CD4-positive, alpha-beta T cell (primary cell): ENCODE measurements at regions of chr6 and their contacts with region 1.

Region 1: GRCh38 chr6:54060286-54060685 is 51.0 kb upstream of the MLIP start:
- DNase-seq: no peak
- ATAC-seq: no peak
- H3K4me3 ChIP-seq: no peak overlapping the region
- H3K4me3 Mint-ChIP-seq: no peak overlapping the region
- H3K27ac ChIP-seq: no peak overlapping the region
- H3K27ac Mint-ChIP-seq: no peak overlapping the region
- H3K4me1 ChIP-seq: no peaks in the 10 kb centered on the region
- H3K4me1 Mint-ChIP-seq: no peaks in the 10 kb centered on the region
- H3K27me3 ChIP-seq: no peaks in the 10 kb centered on the region
- H3K27me3 Mint-ChIP-seq: peaks cover 8% of the 10 kb centered on the region
- CTCF ChIP-seq: no peak

Region 2: DNA sequence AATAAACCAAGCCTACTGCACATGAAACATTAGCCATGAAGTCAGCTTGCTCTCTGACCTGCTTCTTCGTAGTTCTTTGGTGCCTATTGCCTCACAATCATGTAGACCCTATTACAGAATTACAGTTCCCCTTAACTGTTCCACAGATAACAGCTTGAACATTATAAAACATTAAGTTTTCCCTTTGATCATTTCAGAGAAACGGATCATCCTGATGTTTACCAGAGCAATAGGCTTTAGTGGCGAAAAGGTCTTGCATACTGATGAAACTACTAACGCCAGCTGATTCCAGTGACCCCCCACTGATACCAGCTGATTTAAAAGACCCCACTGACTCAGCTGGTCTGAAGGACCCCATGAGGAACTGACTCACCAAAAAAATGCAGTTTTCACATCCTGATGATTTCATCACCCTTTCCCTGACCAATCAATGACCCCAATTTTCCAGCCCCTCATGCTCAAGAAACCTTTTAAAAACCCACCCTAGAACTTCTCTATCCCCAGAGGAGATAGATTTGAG is 11.6 kb after region 1 on chr6:
- CTCF ChIA-PET with region 1: no interaction called
- POLR2A ChIA-PET with region 1: no interaction called
- intact Hi-C with region 1: loop called in 1 of 2 experiments (anchors 1 kb)
- DNase-seq: no peak
- ATAC-seq: no peak
- H3K4me3 ChIP-seq: no peak overlapping the region
- H3K4me3 Mint-ChIP-seq: no peak overlapping the region
- H3K27ac ChIP-seq: no peak overlapping the region
- H3K27ac Mint-ChIP-seq: no peak overlapping the region
- H3K4me1 ChIP-seq: no peaks in the 10 kb centered on the region
- H3K4me1 Mint-ChIP-seq: no peaks in the 10 kb centered on the region
- H3K27me3 ChIP-seq: no peaks in the 10 kb centered on the region
- H3K27me3 Mint-ChIP-seq: peaks cover 9% of the 10 kb centered on the region
- CTCF ChIP-seq: no peak

Region 3: GRCh38 chr6:54085541-54085940 is 25.3 kb after region 1 on chr6:
- CTCF ChIA-PET with region 1: no interaction called
- POLR2A ChIA-PET with region 1: no interaction called
- intact Hi-C with region 1: no loop called
- DNase-seq: no peak
- ATAC-seq: no peak
- H3K4me3 ChIP-seq: no peak overlapping the region
- H3K4me3 Mint-ChIP-seq: no peak overlapping the region
- H3K27ac ChIP-seq: no peak overlapping the region
- H3K27ac Mint-ChIP-seq: no peak overlapping the region
- H3K4me1 ChIP-seq: no peaks in the 10 kb centered on the region
- H3K4me1 Mint-ChIP-seq: no peaks in the 10 kb centered on the region
- H3K27me3 ChIP-seq: no peaks in the 10 kb centered on the region
- H3K27me3 Mint-ChIP-seq: peaks cover 4% of the 10 kb centered on the region
- CTCF ChIP-seq: no peak